ENCODE measurements at regions of chr11 and their contacts with region 1.

Region 1: GRCh38 chr11:102287964-102288724 is 29.1 kb upstream of the BIRC3 start:
- DNase-seq: peak; percentile 51
- ATAC-seq: peak; percentile 89
- H3K4me3 Mint-ChIP-seq: peak overlapping the region; percentile 34
- H3K27ac Mint-ChIP-seq: no peak overlapping the region
- H3K4me1 Mint-ChIP-seq: peaks cover 26% of the 10 kb centered on the region
- H3K27me3 Mint-ChIP-seq: no peaks in the 10 kb centered on the region

Region 2: DNA sequence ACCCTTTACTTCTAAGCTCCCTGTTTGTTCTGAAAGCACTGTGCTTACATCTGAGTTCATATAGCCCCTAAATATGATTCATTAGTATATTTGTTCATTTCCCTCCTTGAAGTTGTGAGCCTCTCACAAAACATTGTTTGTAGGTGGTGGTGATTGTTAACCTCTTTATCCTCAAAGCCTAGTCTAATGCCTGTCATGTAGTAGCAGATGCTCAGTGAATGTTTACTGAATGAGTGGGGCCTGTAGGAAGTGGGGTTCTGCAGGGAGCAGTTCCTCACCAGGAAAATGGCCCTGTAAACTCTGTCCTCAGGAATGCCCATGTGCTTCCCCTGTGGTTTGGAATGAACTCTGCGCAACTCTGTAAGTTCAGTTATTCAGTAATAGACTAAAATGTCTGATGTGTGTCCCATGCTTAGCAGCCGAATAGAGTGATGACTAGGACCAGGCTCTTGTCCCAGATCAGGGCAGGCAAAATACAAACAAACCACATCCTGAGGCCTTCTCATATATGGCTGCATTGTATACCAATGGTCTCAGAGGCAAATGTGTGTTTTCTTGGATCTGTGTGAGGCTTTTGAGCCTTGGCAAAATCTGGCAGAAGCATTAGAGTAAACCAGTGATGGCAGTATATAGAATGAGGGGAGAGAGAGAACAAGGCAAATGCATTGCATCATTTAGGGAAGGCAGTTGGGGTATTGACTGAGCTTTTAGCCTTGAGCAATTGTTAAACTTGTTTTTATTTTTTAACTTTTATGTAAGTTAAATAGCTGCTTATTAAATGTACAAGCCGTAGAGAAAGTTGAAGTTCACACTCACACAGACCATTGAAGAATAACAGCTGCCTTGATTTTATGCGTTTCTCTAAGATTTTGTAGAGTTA is 62.2 kb before region 1 on chr11:
- CTCF ChIA-PET with region 1: no interaction called
- DNase-seq: no peak
- ATAC-seq: no peak
- H3K4me3 Mint-ChIP-seq: no peak overlapping the region
- H3K27ac Mint-ChIP-seq: no peak overlapping the region
- H3K4me1 Mint-ChIP-seq: no peaks in the 10 kb centered on the region
- H3K27me3 Mint-ChIP-seq: peaks cover 14% of the 10 kb centered on the region

Region 3: GRCh38 chr11:102244681-102245409 is 43.3 kb before region 1 on chr11:
- CTCF ChIA-PET with region 1: no interaction called
- DNase-seq: no peak
- ATAC-seq: no peak
- H3K4me3 Mint-ChIP-seq: no peak overlapping the region
- H3K27ac Mint-ChIP-seq: no peak overlapping the region
- H3K4me1 Mint-ChIP-seq: no peaks in the 10 kb centered on the region
- H3K27me3 Mint-ChIP-seq: peaks cover 2% of the 10 kb centered on the region

Region 4: GRCh38 chr11:102268329-102269193 is 19.6 kb before region 1 on chr11:
- CTCF ChIA-PET with region 1: interaction called, 21 read pairs
- DNase-seq: peak; percentile 81
- ATAC-seq: peak; percentile 99
- H3K4me3 Mint-ChIP-seq: peak overlapping the region; percentile 61
- H3K27ac Mint-ChIP-seq: no peak overlapping the region
- H3K4me1 Mint-ChIP-seq: peaks cover 24% of the 10 kb centered on the region
- H3K27me3 Mint-ChIP-seq: peaks cover 48% of the 10 kb centered on the region

Region 5: GRCh38 chr11:102323542-102324251 is 35.6 kb after region 1 on chr11:
- CTCF ChIA-PET with region 1: interaction called, 65 read pairs
- DNase-seq: no peak
- ATAC-seq: no peak
- H3K4me3 Mint-ChIP-seq: no peak overlapping the region
- H3K27ac Mint-ChIP-seq: peak overlapping the region; percentile 59
- H3K4me1 Mint-ChIP-seq: peaks cover 58% of the 10 kb centered on the region
- H3K27me3 Mint-ChIP-seq: no peaks in the 10 kb centered on the region

Region 6: GRCh38 chr11:102346748-102347461 is 58.8 kb after region 1 on chr11 and contains the start of gene BIRC2:
- CTCF ChIA-PET with region 1: interaction called, 110 read pairs
- DNase-seq: peak; percentile 95
- ATAC-seq: peak; percentile 95
- H3K4me3 Mint-ChIP-seq: peak within 1 kb of the TSS; percentile 88
- H3K27ac Mint-ChIP-seq: peak within 1 kb of the TSS; percentile 97
- H3K4me1 Mint-ChIP-seq: peaks cover 31% of the 10 kb centered on the region
- H3K27me3 Mint-ChIP-seq: no peaks in the 10 kb centered on the region
- total RNA-seq, gene BIRC2: 30.7 to 30.9 TPM

Region 7: GRCh38 chr11:102495161-102496042 is 207.3 kb after region 1 on chr11:
- CTCF ChIA-PET with region 1: interaction called, 19 read pairs
- DNase-seq: peak; percentile 45
- ATAC-seq: peak; percentile 78
- H3K4me3 Mint-ChIP-seq: peak overlapping the region; percentile 15
- H3K27ac Mint-ChIP-seq: peak overlapping the region; percentile 39
- H3K4me1 Mint-ChIP-seq: peaks cover 16% of the 10 kb centered on the region
- H3K27me3 Mint-ChIP-seq: peaks cover 22% of the 10 kb centered on the region

Region 8: GRCh38 chr11:102513869-102514268 is 225.7 kb after region 1 on chr11:
- CTCF ChIA-PET with region 1: no interaction called
- DNase-seq: no peak
- ATAC-seq: no peak
- H3K4me3 Mint-ChIP-seq: no peak overlapping the region
- H3K27ac Mint-ChIP-seq: no peak overlapping the region
- H3K4me1 Mint-ChIP-seq: no peaks in the 10 kb centered on the region
- H3K27me3 Mint-ChIP-seq: peaks cover 2% of the 10 kb centered on the region

Region 9: GRCh38 chr11:102614485-102614884 is 326.3 kb after region 1 on chr11:
- CTCF ChIA-PET with region 1: interaction called, 27 read pairs
- DNase-seq: no peak
- ATAC-seq: no peak
- H3K4me3 Mint-ChIP-seq: no peak overlapping the region
- H3K27ac Mint-ChIP-seq: no peak overlapping the region
- H3K4me1 Mint-ChIP-seq: peaks cover 11% of the 10 kb centered on the region
- H3K27me3 Mint-ChIP-seq: no peaks in the 10 kb centered on the region

Region 10: GRCh38 chr11:102666331-102666957 is 378.3 kb after region 1 on chr11:
- CTCF ChIA-PET with region 1: interaction called, 14 read pairs
- DNase-seq: no peak
- ATAC-seq: peak; percentile 49
- H3K4me3 Mint-ChIP-seq: no peak overlapping the region
- H3K27ac Mint-ChIP-seq: no peak overlapping the region
- H3K4me1 Mint-ChIP-seq: no peaks in the 10 kb centered on the region
- H3K27me3 Mint-ChIP-seq: peaks cover 2% of the 10 kb centered on the region

Measured in activated CD8-positive, alpha-beta memory T cell treated with anti-CD3 and anti-CD28 coated beads, Interleukin-2, amount 10 ng/mL, durations not matched to agents 7 days and 5 days (primary cell).